ENCODE measurements at regions of chr6 and their contacts with region 1.

Region 1: GRCh38 chr6:108712946-108713345 is 135.3 kb upstream of the ARMC2 start:
- DNase-seq: no peak
- ATAC-seq: no peak
- H3K4me3 ChIP-seq: no peak overlapping the region
- H3K27ac ChIP-seq: no peak overlapping the region
- H3K4me1 ChIP-seq: no peaks in the 10 kb centered on the region
- H3K27me3 ChIP-seq: no peaks in the 10 kb centered on the region
- CTCF ChIP-seq: no peak

Region 2: GRCh38 chr6:107879941-107880657 is 832.8 kb before region 1 on chr6:
- CTCF ChIA-PET with region 1: no interaction called
- POLR2A ChIA-PET with region 1: interaction called, 15 read pairs
- in situ Hi-C with region 1: no loop called
- intact Hi-C with region 1: no loop called
- DNase-seq: no peak
- ATAC-seq: no peak
- H3K4me3 ChIP-seq: no peak overlapping the region
- H3K27ac ChIP-seq: no peak overlapping the region
- H3K4me1 ChIP-seq: no peaks in the 10 kb centered on the region
- H3K27me3 ChIP-seq: no peaks in the 10 kb centered on the region
- CTCF ChIP-seq: no peak

Region 3: GRCh38 chr6:108609276-108609769 is 103.6 kb before region 1 on chr6:
- CTCF ChIA-PET with region 1: no interaction called
- POLR2A ChIA-PET with region 1: no interaction called
- in situ Hi-C with region 1: no loop called
- intact Hi-C with region 1: no loop called
- DNase-seq: no peak
- ATAC-seq: peak; percentile 42; the same call in 1 of the 2 replicates
- H3K4me3 ChIP-seq: no peak overlapping the region
- H3K27ac ChIP-seq: no peak overlapping the region
- H3K4me1 ChIP-seq: peaks cover 18% of the 10 kb centered on the region
- H3K27me3 ChIP-seq: no peaks in the 10 kb centered on the region
- CTCF ChIP-seq: no peak

Measured in Panc1 (cell line).